ENCODE measurements at regions of chr10 and their contacts with region 1.

Region 1: GRCh38 chr10:46030091-46030937 is at the start of gene NCOA4:
- DNase-seq: peak; percentile 98
- H3K4me3 Mint-ChIP-seq: peak within 1 kb of the TSS; percentile 84
- H3K27ac Mint-ChIP-seq: peak within 1 kb of the TSS; percentile 86
- H3K4me1 Mint-ChIP-seq: peaks cover 48% of the 10 kb centered on the region
- H3K27me3 Mint-ChIP-seq: no peaks in the 10 kb centered on the region
- total RNA-seq, gene NCOA4: 79.9 to 85.3 TPM

Region 2: GRCh38 chr10:45470098-45471012 is 560.0 kb before region 1 on chr10:
- CTCF ChIA-PET with region 1: no interaction called
- POLR2A ChIA-PET with region 1: no interaction called
- intact Hi-C with region 1: loop called (anchors 2 kb)
- DNase-seq: peak; percentile 58
- H3K4me3 Mint-ChIP-seq: peak overlapping the region; percentile 6
- H3K27ac Mint-ChIP-seq: peak overlapping the region; percentile 72
- H3K4me1 Mint-ChIP-seq: peaks cover 22% of the 10 kb centered on the region
- H3K27me3 Mint-ChIP-seq: no peaks in the 10 kb centered on the region

Region 3: GRCh38 chr10:45997994-45998763 is 32.1 kb before region 1 on chr10:
- CTCF ChIA-PET with region 1: interaction called, 5 read pairs
- POLR2A ChIA-PET with region 1: no interaction called
- intact Hi-C with region 1: loop called (anchors 2 kb)
- DNase-seq: no peak
- H3K4me3 Mint-ChIP-seq: no peak overlapping the region
- H3K27ac Mint-ChIP-seq: no peak overlapping the region
- H3K4me1 Mint-ChIP-seq: no peaks in the 10 kb centered on the region
- H3K27me3 Mint-ChIP-seq: no peaks in the 10 kb centered on the region

Region 4: GRCh38 chr10:46092524-46093081 is 62.3 kb after region 1 on chr10:
- CTCF ChIA-PET with region 1: no interaction called
- POLR2A ChIA-PET with region 1: no interaction called
- intact Hi-C with region 1: loop called (anchors 5 kb)
- DNase-seq: no peak
- H3K4me3 Mint-ChIP-seq: no peak overlapping the region
- H3K27ac Mint-ChIP-seq: no peak overlapping the region
- H3K4me1 Mint-ChIP-seq: peaks cover 5% of the 10 kb centered on the region
- H3K27me3 Mint-ChIP-seq: no peaks in the 10 kb centered on the region

Measured in activated CD4-positive, alpha-beta memory T cell treated with anti-CD3 and anti-CD28 coated beads for 36 hours (primary cell).